ENCODE measurements at regions of chr17 and their contacts with region 1.

Region 1: DNA sequence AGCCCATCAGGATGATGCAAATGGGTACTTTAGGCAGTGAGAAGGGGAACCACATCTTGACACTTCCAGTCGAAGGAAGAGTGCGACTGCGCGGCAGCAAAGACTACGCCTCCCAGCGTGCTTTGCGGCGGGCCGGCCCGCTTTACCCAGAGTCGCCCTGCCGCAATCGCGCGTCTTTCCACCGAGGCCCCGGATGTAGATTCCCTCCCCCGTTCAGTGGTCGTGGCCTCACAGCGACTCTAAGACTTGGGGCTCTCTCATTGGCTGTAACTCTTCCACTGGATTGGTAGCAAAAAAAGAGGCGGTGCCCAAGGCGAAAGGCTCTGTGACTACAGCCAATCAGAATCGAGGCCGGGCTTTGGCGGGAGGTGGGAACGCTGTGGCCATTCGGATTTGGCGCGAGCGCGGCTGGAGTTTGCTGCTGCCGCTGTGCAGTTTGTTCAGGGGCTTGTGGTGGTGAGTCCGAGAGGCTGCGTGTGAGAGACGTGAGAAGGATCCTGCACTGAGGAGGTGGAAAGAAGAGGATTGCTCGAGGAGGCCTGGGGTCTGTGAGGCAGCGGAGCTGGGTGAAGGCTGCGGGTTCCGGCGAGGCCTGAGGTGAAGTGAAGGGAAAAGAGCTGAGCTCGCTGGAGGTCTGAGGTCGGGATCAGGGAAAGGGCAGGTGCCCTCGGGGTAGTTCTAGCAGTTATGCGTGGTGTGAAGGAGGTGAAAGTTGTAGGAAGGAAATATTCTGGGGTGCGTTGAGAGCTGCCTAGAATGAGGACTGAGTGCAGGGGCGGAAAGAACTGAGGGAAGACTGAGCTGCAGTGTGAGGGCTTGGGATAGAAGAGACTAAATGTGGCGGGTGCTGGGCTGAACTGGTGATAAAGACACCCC is at the start of gene CDC6:
- DNase-seq: peak; percentile 100
- H3K4me3 Mint-ChIP-seq: peak within 1 kb of the TSS; percentile 83
- H3K27ac Mint-ChIP-seq: peak within 1 kb of the TSS; percentile 90
- H3K4me1 Mint-ChIP-seq: peaks cover 71% of the 10 kb centered on the region
- H3K27me3 Mint-ChIP-seq: no peaks in the 10 kb centered on the region
- CTCF ChIP-seq: no peak
- total RNA-seq, gene CDC6: 567 and 645 TPM in 2 replicates

Region 2: DNA sequence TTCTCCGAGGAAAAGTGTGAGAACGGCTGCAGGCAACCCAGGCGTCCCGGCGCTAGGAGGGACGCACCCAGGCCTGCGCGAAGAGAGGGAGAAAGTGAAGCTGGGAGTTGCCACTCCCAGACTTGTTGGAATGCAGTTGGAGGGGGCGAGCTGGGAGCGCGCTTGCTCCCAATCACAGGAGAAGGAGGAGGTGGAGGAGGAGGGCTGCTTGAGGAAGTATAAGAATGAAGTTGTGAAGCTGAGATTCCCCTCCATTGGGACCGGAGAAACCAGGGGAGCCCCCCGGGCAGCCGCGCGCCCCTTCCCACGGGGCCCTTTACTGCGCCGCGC is 587.9 kb before region 1 on chr17 and contains the start of gene ERBB2:
- CTCF ChIA-PET with region 1: interaction called, 6 read pairs
- intact Hi-C with region 1: loop called (anchors 5 kb)
- DNase-seq: peak; percentile 100
- H3K4me3 Mint-ChIP-seq: peak within 1 kb of the TSS; percentile 71
- H3K27ac Mint-ChIP-seq: peak within 1 kb of the TSS; percentile 67
- H3K4me1 Mint-ChIP-seq: peaks cover 68% of the 10 kb centered on the region
- H3K27me3 Mint-ChIP-seq: no peaks in the 10 kb centered on the region
- CTCF ChIP-seq: no peak
- total RNA-seq, gene ERBB2: 4,829 and 4,830 TPM in 2 replicates

Region 3: DNA sequence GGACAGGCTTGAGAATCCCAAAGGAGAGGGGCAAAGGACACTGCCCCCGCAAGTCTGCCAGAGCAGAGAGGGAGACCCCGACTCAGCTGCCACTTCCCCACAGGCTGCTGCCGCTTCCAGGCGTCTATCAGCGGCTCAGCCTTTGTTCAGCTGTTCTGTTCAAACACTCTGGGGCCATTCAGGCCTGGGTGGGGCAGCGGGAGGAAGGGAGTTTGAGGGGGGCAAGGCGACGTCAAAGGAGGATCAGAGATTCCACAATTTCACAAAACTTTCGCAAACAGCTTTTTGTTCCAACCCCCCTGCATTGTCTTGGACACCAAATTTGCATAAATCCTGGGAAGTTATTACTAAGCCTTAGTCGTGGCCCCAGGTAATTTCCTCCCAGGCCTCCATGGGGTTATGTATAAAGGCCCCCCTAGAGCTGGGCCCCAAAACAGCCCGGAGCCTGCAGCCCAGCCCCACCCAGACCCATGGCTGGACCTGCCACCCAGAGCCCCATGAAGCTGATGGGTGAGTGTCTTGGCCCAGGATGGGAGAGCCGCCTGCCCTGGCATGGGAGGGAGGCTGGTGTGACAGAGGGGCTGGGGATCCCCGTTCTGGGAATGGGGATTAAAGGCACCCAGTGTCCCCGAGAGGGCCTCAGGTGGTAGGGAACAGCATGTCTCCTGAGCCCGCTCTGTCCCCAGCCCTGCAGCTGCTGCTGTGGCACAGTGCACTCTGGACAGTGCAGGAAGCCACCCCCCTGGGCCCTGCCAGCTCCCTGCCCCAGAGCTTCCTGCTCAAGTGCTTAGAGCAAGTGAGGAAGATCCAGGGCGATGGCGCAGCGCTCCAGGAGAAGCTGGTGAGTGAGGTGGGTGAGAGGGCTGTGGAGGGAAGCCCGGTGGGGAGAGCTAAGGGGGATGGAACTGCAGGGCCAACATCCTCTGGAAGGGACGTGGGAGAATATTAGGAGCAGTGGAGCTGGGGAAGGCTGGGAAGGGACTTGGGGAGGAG is 272.4 kb before region 1 on chr17 and contains the start of gene CSF3:
- CTCF ChIA-PET with region 1: interaction called, 19 read pairs
- intact Hi-C with region 1: loop called (anchors 1 kb)
- DNase-seq: peak; percentile 66
- H3K4me3 Mint-ChIP-seq: no peak within 1 kb of the TSS
- H3K27ac Mint-ChIP-seq: no peak within 1 kb of the TSS
- H3K4me1 Mint-ChIP-seq: peaks cover 10% of the 10 kb centered on the region
- H3K27me3 Mint-ChIP-seq: peaks cover 74% of the 10 kb centered on the region
- CTCF ChIP-seq: no peak
- total RNA-seq, gene CSF3: 0.38 TPM in 1 of 2 replicates, not detected in the other

Region 4: DNA sequence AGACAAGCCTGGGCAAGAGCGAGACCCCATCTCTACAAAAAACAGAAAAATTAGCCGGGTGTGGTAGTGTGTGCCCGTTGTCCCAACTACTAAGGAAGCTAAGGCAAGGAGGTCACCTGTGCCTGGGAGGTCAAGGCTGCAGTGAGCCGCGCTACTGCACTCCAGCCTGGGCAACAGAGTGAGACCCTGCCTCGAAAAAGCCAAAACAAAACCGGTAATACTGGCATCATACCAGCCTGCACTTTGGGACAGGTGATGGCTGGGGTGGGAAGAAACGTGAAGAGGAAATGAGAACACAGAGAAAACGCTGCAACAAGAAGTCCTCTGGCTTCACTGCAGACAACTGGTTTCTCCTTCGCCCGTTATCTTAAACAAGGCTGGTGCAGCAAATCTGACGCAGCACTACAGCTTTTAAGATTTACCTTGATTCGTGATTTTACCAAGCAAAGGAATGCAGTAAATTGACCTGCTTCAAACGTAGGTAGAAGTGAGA is 148.1 kb before region 1 on chr17:
- CTCF ChIA-PET with region 1: interaction called, 13 read pairs
- intact Hi-C with region 1: loop called (anchors 1 kb)
- DNase-seq: peak; percentile 72
- H3K4me3 Mint-ChIP-seq: peak overlapping the region; percentile 98
- H3K27ac Mint-ChIP-seq: peak overlapping the region; percentile 98
- H3K4me1 Mint-ChIP-seq: peaks cover 45% of the 10 kb centered on the region
- H3K27me3 Mint-ChIP-seq: no peaks in the 10 kb centered on the region
- CTCF ChIP-seq: no peak

Region 5: DNA sequence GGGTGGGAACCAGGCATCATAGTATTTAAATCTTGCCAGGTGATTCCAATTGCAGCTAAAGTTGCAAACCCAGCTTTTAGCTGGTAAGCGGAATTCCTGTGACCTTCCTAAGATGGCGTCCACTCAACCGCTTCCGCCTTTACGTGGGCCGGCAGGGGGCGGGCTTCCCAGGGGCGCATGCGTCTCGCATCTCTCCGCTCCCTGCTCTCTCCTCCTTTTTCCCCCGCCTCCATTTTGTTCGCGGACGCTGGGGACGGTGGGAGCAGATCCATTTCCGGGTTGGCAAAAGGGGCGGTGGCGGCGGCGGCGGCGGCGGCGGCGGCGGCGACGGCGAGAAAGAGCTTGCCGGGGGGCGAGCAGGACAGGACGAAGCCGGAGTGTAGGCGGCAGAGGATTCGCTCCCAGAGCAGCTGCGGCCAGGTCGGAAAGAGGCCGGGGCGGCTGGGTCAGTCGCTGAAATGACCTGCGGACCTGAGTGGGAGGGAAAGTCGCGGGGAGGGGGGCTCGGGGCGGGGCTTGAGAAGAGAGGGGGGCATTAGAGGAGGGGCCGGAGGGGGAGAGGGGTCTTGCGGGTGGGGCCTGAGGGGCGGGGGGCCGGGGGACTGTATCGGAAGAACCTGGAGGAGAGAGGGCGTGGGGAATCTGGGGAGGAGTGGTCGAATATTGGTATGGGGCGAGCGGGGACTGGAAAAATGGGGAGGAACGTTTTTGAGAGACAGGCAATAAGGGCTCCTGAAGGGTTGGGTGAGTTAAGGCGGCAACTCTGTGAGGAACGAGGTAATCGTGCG is 68.5 kb before region 1 on chr17 and contains the start of gene WIPF2:
- CTCF ChIA-PET with region 1: interaction called, 171 read pairs
- intact Hi-C with region 1: loop called (anchors 1 kb)
- DNase-seq: peak; percentile 100
- H3K4me3 Mint-ChIP-seq: peak within 1 kb of the TSS; percentile 78
- H3K27ac Mint-ChIP-seq: peak within 1 kb of the TSS; percentile 36
- H3K4me1 Mint-ChIP-seq: peaks cover 31% of the 10 kb centered on the region
- H3K27me3 Mint-ChIP-seq: no peaks in the 10 kb centered on the region
- CTCF ChIP-seq: no peak
- total RNA-seq, gene WIPF2: 327 and 376 TPM in 2 replicates

Region 6: GRCh38 chr17:40303009-40303657 is 15.4 kb after region 1 on chr17:
- CTCF ChIA-PET with region 1: interaction called, 30 read pairs
- intact Hi-C with region 1: no loop called
- DNase-seq: peak; percentile 94
- H3K4me3 Mint-ChIP-seq: no peak overlapping the region
- H3K27ac Mint-ChIP-seq: peak overlapping the region; percentile 26
- H3K4me1 Mint-ChIP-seq: peaks cover 34% of the 10 kb centered on the region
- H3K27me3 Mint-ChIP-seq: no peaks in the 10 kb centered on the region
- CTCF ChIP-seq: peak; percentile 99

Region 7: GRCh38 chr17:40362696-40363110 is 75.0 kb after region 1 on chr17:
- CTCF ChIA-PET with region 1: interaction called, 15 read pairs
- intact Hi-C with region 1: no loop called
- DNase-seq: peak; percentile 100
- H3K4me3 Mint-ChIP-seq: peak overlapping the region; percentile 81
- H3K27ac Mint-ChIP-seq: no peak overlapping the region
- H3K4me1 Mint-ChIP-seq: peaks cover 39% of the 10 kb centered on the region
- H3K27me3 Mint-ChIP-seq: peaks cover 9% of the 10 kb centered on the region
- CTCF ChIP-seq: no peak

Measured in Calu3 (cell line).